CD4-positive, alpha-beta memory T cell (primary cell): ENCODE measurements at regions of chr6 and their contacts with region 1.

Region 1: GRCh38 chr6:73329201-73329600 is 24.9 kb downstream of the DPPA5 start:
- DNase-seq: no peak
- H3K4me3 ChIP-seq: no peak overlapping the region
- H3K4me3 Mint-ChIP-seq: no peak overlapping the region
- H3K27ac ChIP-seq: no peak overlapping the region
- H3K27ac Mint-ChIP-seq: no peak overlapping the region
- H3K4me1 ChIP-seq: no peaks in the 10 kb centered on the region
- H3K4me1 Mint-ChIP-seq: peaks cover 0 to 4% (median 3%) of the 10 kb centered on the region in 4 donors
- H3K27me3 ChIP-seq: no peaks in the 10 kb centered on the region
- H3K27me3 Mint-ChIP-seq: peaks cover 8 to 15% of the 10 kb centered on the region in 2 donors

Region 2: DNA sequence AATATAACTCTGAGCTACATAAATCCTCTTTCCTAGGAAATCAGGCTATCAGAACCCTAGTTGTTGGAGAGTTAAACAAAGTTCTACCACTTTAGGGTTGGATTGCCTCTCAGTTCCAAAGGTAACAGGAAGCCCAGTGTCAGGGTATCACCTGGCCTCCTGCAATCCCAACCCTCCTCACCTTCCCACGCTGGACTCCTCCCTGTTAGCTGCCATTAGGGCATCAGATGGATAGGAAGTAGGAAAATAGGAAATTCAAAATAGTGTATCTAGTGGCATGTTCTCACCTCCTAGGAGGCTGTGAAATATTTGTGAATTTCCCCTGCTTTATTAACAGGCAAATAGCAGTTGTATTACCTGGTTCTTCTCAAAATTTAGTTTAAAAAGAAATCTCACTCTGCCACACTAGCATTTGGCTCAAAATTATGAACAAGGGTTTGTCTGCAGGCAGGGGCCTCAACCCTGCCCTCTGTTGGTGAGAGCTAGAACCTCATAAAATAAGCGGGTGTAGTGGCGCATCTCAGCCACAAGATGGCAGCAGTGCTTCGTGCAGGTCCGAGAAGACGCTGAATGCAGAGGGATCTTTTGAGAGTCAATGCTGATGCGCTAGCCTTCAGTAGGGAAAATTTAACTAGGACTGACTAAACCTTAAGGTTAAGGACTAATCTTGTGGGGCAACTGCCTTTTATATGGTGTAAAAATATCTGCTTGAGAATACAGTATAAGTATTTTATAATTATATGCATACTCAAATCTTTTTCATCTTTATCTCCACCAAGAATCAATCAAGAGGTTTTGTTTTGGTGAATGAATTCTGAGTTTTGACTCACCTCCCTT is 917.1 kb before region 1 on chr6:
- CTCF ChIA-PET with region 1: interaction called, 87 read pairs
- POLR2A ChIA-PET with region 1: no interaction called
- intact Hi-C with region 1: no loop called
- DNase-seq: peak; percentile 65 to 85 (median 76)
- H3K4me3 ChIP-seq: no peak overlapping the region
- H3K4me3 Mint-ChIP-seq: no peak overlapping the region
- H3K27ac ChIP-seq: no peak overlapping the region
- H3K27ac Mint-ChIP-seq: no peak overlapping the region
- H3K4me1 ChIP-seq: no peaks in the 10 kb centered on the region
- H3K4me1 Mint-ChIP-seq: peaks cover 0 to 2% (median under 1%) of the 10 kb centered on the region in 4 donors
- H3K27me3 ChIP-seq: no peaks in the 10 kb centered on the region
- H3K27me3 Mint-ChIP-seq: peaks cover 3 to 7% of the 10 kb centered on the region in 2 donors

Region 3: GRCh38 chr6:73109659-73110058 is 219.5 kb before region 1 on chr6:
- CTCF ChIA-PET with region 1: no interaction called
- POLR2A ChIA-PET with region 1: no interaction called
- intact Hi-C with region 1: no loop called
- DNase-seq: no peak
- H3K4me3 ChIP-seq: no peak overlapping the region
- H3K4me3 Mint-ChIP-seq: no peak overlapping the region
- H3K27ac ChIP-seq: no peak overlapping the region
- H3K27ac Mint-ChIP-seq: no peak overlapping the region
- H3K4me1 ChIP-seq: no peaks in the 10 kb centered on the region
- H3K4me1 Mint-ChIP-seq: no peaks in the 10 kb centered on the region
- H3K27me3 ChIP-seq: no peaks in the 10 kb centered on the region
- H3K27me3 Mint-ChIP-seq: no peaks in the 10 kb centered on the region

Region 4: GRCh38 chr6:73129653-73130443 is 199.4 kb before region 1 on chr6:
- CTCF ChIA-PET with region 1: interaction called, 8 read pairs
- POLR2A ChIA-PET with region 1: no interaction called
- intact Hi-C with region 1: loop called (anchors 5 kb)
- DNase-seq: peak; percentile 64 to 72 (median 65)
- H3K4me3 ChIP-seq: no peak overlapping the region
- H3K4me3 Mint-ChIP-seq: peak overlapping the region; percentile 15 to 58 (median 38)
- H3K27ac ChIP-seq: no peak overlapping the region
- H3K27ac Mint-ChIP-seq: peak overlapping the region in 1 of 7 donors; percentile 57
- H3K4me1 ChIP-seq: no peaks in the 10 kb centered on the region
- H3K4me1 Mint-ChIP-seq: peaks cover 0 to 4% (median 2%) of the 10 kb centered on the region in 4 donors
- H3K27me3 ChIP-seq: no peaks in the 10 kb centered on the region
- H3K27me3 Mint-ChIP-seq: peaks cover 0 to 4% of the 10 kb centered on the region in 2 donors

Region 5: DNA sequence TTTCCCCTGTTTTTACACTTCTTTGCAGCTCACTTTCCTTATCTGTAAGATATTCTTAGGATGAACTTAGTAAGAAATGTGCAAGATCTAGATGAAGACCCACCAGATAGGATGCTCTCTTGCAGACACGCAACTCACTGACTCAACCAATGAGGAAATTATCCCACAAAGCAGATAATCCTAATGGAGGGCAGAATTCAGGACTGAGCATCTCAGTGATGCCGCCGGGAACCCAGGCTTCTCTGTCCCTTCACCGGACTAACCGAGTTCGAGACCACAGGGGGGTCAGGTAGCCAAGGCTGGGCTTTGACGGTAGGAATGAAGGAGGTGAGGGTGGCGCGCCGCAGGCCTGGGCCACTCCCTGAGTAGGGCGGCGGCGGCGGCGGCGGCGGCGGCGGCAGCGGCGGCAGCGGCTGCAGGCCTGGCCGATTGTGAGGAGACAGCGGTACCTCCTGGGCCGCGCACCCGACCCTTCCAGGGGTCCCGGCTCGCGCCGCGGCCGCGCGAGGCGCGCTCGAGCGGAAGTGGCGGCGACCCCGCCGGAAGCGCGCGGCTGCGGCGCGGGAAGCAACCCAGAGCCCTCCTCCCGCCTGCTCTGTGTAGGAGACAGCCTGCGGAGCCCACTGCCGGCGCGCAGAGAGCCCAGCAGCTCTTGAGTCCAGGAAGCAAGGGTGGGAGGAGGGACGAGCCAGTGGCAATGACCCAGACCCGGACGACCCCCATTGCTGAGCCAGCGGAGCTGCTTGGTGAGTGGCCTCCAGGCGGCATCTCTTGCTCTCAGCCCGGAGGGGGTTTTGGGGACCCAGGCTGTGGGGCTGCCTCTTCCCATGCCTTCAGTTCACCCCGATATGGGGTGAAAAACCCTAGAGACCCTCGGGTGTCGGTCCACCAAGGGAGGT is 66.3 kb before region 1 on chr6 and contains the start of gene KHDC1:
- CTCF ChIA-PET with region 1: interaction called, 3 read pairs
- POLR2A ChIA-PET with region 1: no interaction called
- intact Hi-C with region 1: loop called (anchors 10 kb)
- DNase-seq: peak; percentile 48 to 59 (median 56)
- H3K4me3 ChIP-seq: peak within 1 kb of the TSS; percentile 43 to 82
- H3K4me3 Mint-ChIP-seq: peak within 1 kb of the TSS; percentile 78 to 92 (median 86)
- H3K27ac ChIP-seq: peak within 1 kb of the TSS; percentile 58
- H3K27ac Mint-ChIP-seq: peak within 1 kb of the TSS; percentile 47 to 94 (median 81)
- H3K4me1 ChIP-seq: peaks cover 23% of the 10 kb centered on the region
- H3K4me1 Mint-ChIP-seq: peaks cover 13 to 43% (median 23%) of the 10 kb centered on the region in 4 donors
- H3K27me3 ChIP-seq: no peaks in the 10 kb centered on the region
- H3K27me3 Mint-ChIP-seq: no peaks in the 10 kb centered on the region
- total RNA-seq, gene KHDC1: 1.7 TPM

Region 6: GRCh38 chr6:73309769-73310502 is 19.3 kb before region 1 on chr6:
- CTCF ChIA-PET with region 1: interaction called, 18 read pairs
- POLR2A ChIA-PET with region 1: no interaction called
- intact Hi-C with region 1: no loop called
- DNase-seq: peak; percentile 35 to 54 (median 45)
- H3K4me3 ChIP-seq: peak overlapping the region; percentile 68 to 94
- H3K4me3 Mint-ChIP-seq: peak overlapping the region; percentile 93 to 98 (median 97)
- H3K27ac ChIP-seq: peak overlapping the region; percentile 39
- H3K27ac Mint-ChIP-seq: peak overlapping the region in 6 of 7 donors; percentile 8 to 93 (median 88)
- H3K4me1 ChIP-seq: peaks cover 12% of the 10 kb centered on the region
- H3K4me1 Mint-ChIP-seq: peaks cover 10 to 34% (median 14%) of the 10 kb centered on the region in 4 donors
- H3K27me3 ChIP-seq: peaks cover 1% of the 10 kb centered on the region
- H3K27me3 Mint-ChIP-seq: peaks cover 7 to 13% of the 10 kb centered on the region in 2 donors

Region 7: GRCh38 chr6:73418081-73418741 is 89.0 kb after region 1 on chr6:
- CTCF ChIA-PET with region 1: no interaction called
- POLR2A ChIA-PET with region 1: no interaction called
- intact Hi-C with region 1: no loop called
- DNase-seq: no peak
- H3K4me3 ChIP-seq: no peak overlapping the region
- H3K4me3 Mint-ChIP-seq: peak overlapping the region in 3 of 8 donors; percentile 15 to 61 (median 43)
- H3K27ac ChIP-seq: no peak overlapping the region
- H3K27ac Mint-ChIP-seq: peak overlapping the region; percentile 35 to 90 (median 84)
- H3K4me1 ChIP-seq: peaks cover 26% of the 10 kb centered on the region
- H3K4me1 Mint-ChIP-seq: peaks cover 21 to 29% (median 22%) of the 10 kb centered on the region in 4 donors
- H3K27me3 ChIP-seq: no peaks in the 10 kb centered on the region
- H3K27me3 Mint-ChIP-seq: no peaks in the 10 kb centered on the region